Heart left ventricle (tissue), 16 donors: ENCODE measurements at regions of chr19 and their contacts with region 1.

Region 1: DNA sequence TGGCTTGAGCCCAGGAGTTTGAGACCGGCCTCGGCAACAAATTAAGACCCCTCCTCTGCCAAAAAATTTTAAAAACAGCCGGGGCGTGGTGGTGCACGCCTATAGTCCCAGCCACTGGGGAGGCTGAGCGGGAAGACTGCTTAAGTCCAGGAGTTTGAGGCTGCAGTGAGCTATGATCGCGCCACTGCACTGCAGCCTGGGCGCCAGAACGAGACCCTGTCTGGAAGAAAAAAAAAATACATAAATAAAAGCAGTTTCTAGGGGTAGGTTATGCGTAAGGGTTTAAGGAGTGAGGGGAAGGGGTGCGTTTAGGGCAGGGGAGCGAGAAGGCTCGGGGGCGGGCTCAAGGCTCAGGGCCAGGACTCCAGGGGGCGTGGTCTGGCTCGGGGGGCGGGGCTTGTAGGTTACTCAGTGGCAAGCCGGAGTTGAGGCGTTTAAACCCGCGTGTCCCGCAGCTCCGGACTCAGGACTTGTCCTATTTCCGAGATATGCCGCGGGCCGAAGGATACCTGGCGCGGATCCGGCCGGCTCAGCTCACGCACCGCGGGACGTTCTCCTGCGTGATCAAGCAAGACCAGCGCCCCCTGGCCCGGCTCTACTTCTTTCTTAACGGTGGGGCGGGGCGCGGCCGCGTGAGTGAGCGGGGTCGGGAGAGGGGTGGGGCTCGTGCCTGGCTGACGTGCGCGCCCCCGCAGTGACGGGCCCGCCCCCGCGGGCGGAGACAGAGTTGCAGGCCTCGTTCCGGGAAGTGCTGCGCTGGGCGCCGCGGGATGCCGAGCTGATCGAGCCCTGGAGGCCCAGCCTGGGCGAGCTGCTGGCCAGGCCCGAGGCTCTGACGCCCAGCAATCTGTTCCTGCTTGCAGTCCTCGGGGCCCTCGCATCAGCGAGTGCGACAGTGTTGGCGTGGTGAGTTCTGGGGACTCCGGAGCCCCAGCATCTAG is 10.7 kb downstream of the SPACA6 start:
- DNase-seq: peak; percentile 97 to 98 (median 98)
- ATAC-seq: peak; percentile 94 to 96 (median 96)
- H3K4me3 ChIP-seq: peak overlapping the region; percentile 28 to 77 (median 66)
- H3K27ac ChIP-seq: peak overlapping the region; percentile 81 to 97 (median 90)
- H3K4me1 ChIP-seq: peaks cover 0 to 37% (median 22%) of the 10 kb centered on the region in 12 donors
- H3K27me3 ChIP-seq: no peaks in the 10 kb centered on the region
- CTCF ChIP-seq: peak; percentile 23 to 80 (median 49)
- POLR2A ChIP-seq: peak in 1 of 2 donors; percentile 78

Region 2: GRCh38 chr19:51688672-51689571 is 14.9 kb before region 1 on chr19:
- intact Hi-C with region 1: loop called in 3 of 10 experiments (anchors 1 to 2 kb)
- DNase-seq: peak; percentile 94 to 96 (median 95)
- ATAC-seq: peak; percentile 89 to 93 (median 90)
- H3K4me3 ChIP-seq: peak overlapping the region; percentile 63 to 99 (median 94)
- H3K27ac ChIP-seq: peak overlapping the region; percentile 90 to 100 (median 98)
- H3K4me1 ChIP-seq: peaks cover 0 to 48% (median 33%) of the 10 kb centered on the region in 12 donors
- H3K27me3 ChIP-seq: no peaks in the 10 kb centered on the region
- CTCF ChIP-seq: peak in 4 of 12 donors; percentile 4 to 28 (median 22)
- POLR2A ChIP-seq: peak in 1 of 2 donors; percentile 69

Region 3: GRCh38 chr19:51810228-51810627 is 106.4 kb after region 1 on chr19:
- intact Hi-C with region 1: no loop called
- DNase-seq: peak in 2 of 5 donors; percentile 39 to 52
- ATAC-seq: peak in 3 of 4 donors; percentile 55 to 69 (median 61)
- H3K4me3 ChIP-seq: no peak overlapping the region
- H3K27ac ChIP-seq: peak overlapping the region in 3 of 12 donors; percentile 7 to 90 (median 24)
- H3K4me1 ChIP-seq: peaks cover 0 to 72% (median 10%) of the 10 kb centered on the region in 12 donors
- H3K27me3 ChIP-seq: no peaks in the 10 kb centered on the region
- CTCF ChIP-seq: peak; percentile 12 to 55 (median 42)
- POLR2A ChIP-seq: no peak